Right cardiac atrium (tissue), 5 donors: ENCODE measurements at regions of chr3 and their contacts with region 1.

Region 1: GRCh38 chr3:151838583-151839312 is 24.8 kb downstream of the AADAC start:
- DNase-seq: peak; percentile 21 to 55 (median 41)
- ATAC-seq: peak; percentile 87 to 89
- H3K4me3 ChIP-seq: peak overlapping the region; percentile 18
- H3K27ac ChIP-seq: no peak overlapping the region
- H3K4me1 ChIP-seq: no peaks in the 10 kb centered on the region
- H3K27me3 ChIP-seq: no peaks in the 10 kb centered on the region

Region 2: GRCh38 chr3:151379083-151379734 is 459.5 kb before region 1 on chr3:
- intact Hi-C with region 1: loop called in 1 of 4 experiments (anchors 5 kb)
- DNase-seq: peak; percentile 31 to 74 (median 63)
- ATAC-seq: peak; percentile 65 to 68
- H3K4me3 ChIP-seq: no peak overlapping the region
- H3K27ac ChIP-seq: no peak overlapping the region
- H3K4me1 ChIP-seq: no peaks in the 10 kb centered on the region
- H3K27me3 ChIP-seq: no peaks in the 10 kb centered on the region

Region 3: DNA sequence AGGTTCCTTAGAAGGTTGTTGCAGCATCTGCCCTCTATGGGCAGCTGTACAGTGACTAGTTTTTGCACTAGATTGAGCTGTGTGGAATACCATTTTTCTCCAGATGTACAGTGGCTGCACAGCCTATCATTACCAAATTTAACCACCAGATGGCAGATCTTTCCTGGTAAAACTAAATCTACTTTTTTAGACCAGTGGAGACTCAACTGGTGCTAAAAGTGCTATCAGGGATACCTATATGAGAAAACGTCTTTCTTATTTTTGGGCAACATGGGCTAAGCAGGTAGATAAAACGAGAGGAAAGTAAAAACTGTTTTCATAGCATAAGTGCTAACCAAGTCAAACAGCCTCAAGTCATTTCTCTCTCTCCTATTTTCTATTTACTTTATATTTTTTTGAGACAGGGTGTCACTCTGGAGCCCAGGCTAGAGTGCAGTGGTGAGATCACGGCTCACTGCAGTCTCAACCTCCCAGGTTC is 399.1 kb before region 1 on chr3:
- intact Hi-C with region 1: loop called in 3 of 4 experiments (anchors 5 to 10 kb)
- DNase-seq: no peak
- ATAC-seq: peak; percentile 79 to 84
- H3K4me3 ChIP-seq: no peak overlapping the region
- H3K27ac ChIP-seq: no peak overlapping the region
- H3K4me1 ChIP-seq: no peaks in the 10 kb centered on the region
- H3K27me3 ChIP-seq: no peaks in the 10 kb centered on the region

Region 4: GRCh38 chr3:151445273-151446001 is 393.3 kb before region 1 on chr3:
- intact Hi-C with region 1: loop called (anchors 5 to 10 kb)
- DNase-seq: peak; percentile 38 to 71 (median 49)
- ATAC-seq: peak; percentile 86 to 89
- H3K4me3 ChIP-seq: no peak overlapping the region
- H3K27ac ChIP-seq: no peak overlapping the region
- H3K4me1 ChIP-seq: no peaks in the 10 kb centered on the region
- H3K27me3 ChIP-seq: no peaks in the 10 kb centered on the region

Region 5: DNA sequence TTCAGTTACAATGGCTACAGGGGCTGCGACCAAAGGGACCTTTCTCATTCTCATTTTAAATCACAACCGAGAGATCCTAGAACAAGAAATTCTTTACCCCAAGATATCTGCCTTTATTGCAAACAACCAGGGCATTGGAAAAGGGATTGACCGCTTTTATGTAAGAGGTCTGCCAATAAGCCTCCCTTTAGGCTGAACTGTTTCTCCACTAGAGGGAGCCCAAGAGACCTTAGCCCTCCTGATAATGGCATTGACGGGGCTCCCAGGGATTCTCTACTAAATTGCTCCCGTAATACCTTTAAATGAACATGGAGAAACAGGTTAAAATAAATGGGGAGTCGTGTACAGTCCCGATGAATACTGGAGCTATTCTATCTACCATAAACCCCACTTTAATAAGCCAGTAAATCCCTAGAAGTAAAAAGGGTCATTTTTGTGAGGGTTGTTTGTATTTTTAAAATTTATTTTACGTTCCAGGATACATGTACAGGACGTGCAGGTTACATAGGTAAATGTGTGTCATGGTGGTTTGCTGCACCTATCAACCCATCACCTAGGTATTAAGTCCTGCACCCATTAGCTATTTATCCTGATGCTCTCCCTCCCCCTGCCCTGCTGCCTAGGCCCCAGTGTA is 370.3 kb before region 1 on chr3:
- intact Hi-C with region 1: loop called in 1 of 4 experiments (anchors 10 kb)
- DNase-seq: no peak
- ATAC-seq: peak; percentile 63 to 79
- H3K4me3 ChIP-seq: no peak overlapping the region
- H3K27ac ChIP-seq: no peak overlapping the region
- H3K4me1 ChIP-seq: no peaks in the 10 kb centered on the region
- H3K27me3 ChIP-seq: no peaks in the 10 kb centered on the region

Region 6: DNA sequence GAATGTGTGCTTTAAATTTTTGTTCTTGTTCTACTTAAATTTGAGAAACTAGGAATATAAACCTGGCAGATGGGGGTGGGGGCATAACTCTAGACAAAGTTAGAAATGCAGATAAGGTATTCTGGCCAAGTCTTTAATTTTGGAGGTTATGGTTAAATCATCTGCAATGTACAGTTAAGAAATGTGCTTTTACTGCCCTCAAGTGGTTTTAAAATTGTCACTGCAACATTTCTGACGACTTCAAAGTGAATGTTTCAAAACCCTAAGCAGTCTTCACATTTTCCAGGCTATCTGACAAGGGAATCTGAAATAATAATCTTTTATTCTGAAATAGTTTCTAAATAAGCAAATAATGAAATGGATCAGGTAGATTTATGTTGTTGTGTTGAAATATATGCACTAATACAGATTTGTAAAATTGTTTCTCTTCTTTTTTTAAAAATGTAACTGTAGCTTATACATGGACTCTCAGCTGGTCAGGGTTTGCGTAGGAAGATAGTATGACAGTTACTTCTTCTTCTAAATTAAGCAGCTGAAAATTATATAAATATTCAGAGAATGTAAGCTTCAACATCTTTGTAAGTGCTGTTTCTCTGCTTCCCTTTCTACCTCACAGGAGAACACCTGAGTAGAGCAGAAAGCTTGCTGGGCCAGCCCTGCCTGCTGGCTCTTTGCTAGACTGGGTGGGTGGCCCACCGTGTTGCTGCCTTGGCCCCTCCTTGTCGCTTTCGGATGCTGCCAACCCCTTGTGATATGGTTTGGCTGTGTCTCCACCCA is 79.7 kb after region 1 on chr3:
- intact Hi-C with region 1: loop called in 2 of 4 experiments (anchors 5 to 10 kb)
- DNase-seq: no peak
- ATAC-seq: peak; percentile 38 to 64
- H3K4me3 ChIP-seq: no peak overlapping the region
- H3K27ac ChIP-seq: no peak overlapping the region
- H3K4me1 ChIP-seq: no peaks in the 10 kb centered on the region
- H3K27me3 ChIP-seq: no peaks in the 10 kb centered on the region